ENCODE measurements at regions of chr5 and their contacts with region 1.

Region 1: DNA sequence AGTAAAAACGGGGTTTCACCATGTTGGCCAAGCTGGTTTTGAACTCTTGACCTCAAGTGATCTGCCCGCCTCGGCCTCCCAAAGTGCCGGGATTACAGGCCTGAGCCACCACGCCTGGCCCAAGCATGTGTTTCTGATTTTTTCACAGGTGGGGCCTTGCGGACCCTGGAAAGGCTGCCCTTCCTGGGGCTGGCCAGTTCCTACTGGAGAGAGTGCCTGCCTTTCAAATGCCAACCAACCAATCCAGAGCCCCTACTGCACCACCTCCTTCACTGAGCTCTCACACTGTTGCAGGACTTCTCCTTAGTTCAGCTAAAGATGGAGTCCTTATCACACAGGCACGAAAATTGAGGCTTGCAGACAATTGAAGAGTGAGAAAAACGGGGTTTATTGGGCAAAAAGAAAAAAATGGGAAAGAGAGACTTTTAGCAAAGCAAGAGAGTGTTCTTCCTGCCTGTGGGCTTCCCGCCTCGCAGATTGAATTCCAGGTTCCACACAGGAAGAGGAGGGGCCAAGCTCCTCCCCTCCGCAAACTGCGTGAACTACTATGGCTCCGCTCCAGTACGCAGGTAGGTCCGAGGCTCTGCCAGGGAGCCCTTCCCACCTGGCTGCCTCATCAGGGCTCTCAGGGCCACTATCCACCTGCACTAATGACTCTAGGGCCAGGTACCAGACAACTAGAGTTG is 8.3 kb upstream of the CMBL start:
- DNase-seq: no peak
- ATAC-seq: peak in 1 of 2 experiments; percentile 39; a peak in 1 of 6 replicates
- H3K4me3 ChIP-seq: no peak overlapping the region
- H3K27ac ChIP-seq: no peak overlapping the region
- H3K4me1 ChIP-seq: peaks cover 2% of the 10 kb centered on the region
- CTCF ChIP-seq: no peak
- EP300 ChIP-seq: no peak
- POLR2A ChIP-seq: no peak
- RAD21 ChIP-seq: no peak

Region 2: DNA sequence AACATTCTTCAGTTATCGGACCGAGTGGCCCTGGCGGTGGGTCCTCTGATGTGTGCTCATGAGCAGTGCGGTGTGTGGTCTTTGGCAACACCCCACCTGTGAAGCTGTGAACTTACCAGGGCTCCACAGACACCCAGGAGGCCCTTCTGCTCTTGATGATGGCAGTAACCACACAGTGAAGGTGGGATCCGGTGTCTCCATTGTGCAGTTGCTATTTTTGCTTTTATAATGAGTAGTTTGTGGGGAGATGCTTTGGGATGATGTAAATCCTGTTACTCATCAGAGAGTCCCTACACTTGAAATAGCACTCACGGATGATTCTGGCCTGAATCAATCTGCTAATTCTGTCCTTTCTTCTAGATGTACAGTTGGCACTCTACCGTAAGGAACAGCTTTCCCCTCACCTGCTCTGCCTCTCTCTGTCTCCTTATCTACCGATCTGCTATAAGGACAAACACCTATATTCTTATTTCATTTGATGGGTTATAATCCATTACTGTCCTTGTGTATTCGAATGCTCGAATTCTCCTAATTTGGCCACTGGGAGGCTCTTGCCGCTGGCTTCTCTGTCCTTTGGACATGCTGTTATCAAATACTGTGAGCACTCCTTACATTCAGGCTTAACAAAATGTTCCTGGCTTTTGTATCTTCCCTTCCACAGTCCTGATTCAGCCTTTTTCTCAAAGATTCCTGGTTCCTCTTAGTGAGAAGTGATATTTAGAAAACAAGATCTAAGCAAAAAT is 86.5 kb before region 1 on chr5:
- CTCF ChIA-PET with region 1: no interaction called
- POLR2A ChIA-PET with region 1: no interaction called
- DNase-seq: no peak
- ATAC-seq: peak in 1 of 2 experiments; percentile 49; a peak in 2 of 6 replicates
- H3K4me3 ChIP-seq: no peak overlapping the region
- H3K27ac ChIP-seq: no peak overlapping the region
- H3K4me1 ChIP-seq: peaks cover 18% of the 10 kb centered on the region
- CTCF ChIP-seq: no peak
- EP300 ChIP-seq: no peak
- POLR2A ChIP-seq: no peak
- RAD21 ChIP-seq: no peak

Region 3: DNA sequence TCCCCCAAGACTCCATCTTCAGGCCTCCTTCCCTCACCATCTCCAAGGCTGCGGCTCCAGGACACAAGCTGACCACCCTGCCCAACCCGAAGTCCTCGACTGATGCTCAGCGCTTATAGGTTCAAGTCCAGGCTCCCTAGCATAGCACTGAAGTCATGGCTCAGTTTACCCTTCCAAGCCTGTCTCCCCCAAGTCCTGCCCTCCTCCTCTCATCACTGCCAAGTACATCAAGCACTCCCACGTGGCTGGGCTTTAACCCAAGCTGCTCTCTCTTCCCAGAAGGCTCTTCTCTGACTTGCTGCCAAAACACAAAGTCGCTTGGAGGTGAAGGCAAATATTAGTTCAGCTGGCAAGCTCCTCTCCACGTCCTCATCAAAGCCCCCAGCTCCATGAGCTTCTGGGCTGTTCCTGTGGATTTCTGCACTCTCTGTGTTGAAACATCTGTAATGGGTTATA is 15.4 kb after region 1 on chr5:
- CTCF ChIA-PET with region 1: interaction called, 5 read pairs
- POLR2A ChIA-PET with region 1: interaction called, 10 read pairs
- DNase-seq: peak in 1 of 2 experiments; percentile 56
- ATAC-seq: peak in 1 of 2 experiments; percentile 17; a peak in 1 of 6 replicates
- H3K4me3 ChIP-seq: no peak overlapping the region
- H3K27ac ChIP-seq: no peak overlapping the region
- H3K4me1 ChIP-seq: peaks cover 22% of the 10 kb centered on the region; the same call in 2 of the 3 replicates
- CTCF ChIP-seq: no peak
- EP300 ChIP-seq: no peak
- POLR2A ChIP-seq: no peak
- RAD21 ChIP-seq: no peak

Region 4: GRCh38 chr5:10885026-10885425 is 569.1 kb after region 1 on chr5:
- CTCF ChIA-PET with region 1: no interaction called
- POLR2A ChIA-PET with region 1: no interaction called
- DNase-seq: no peak
- ATAC-seq: no peak
- H3K4me3 ChIP-seq: no peak overlapping the region
- H3K27ac ChIP-seq: no peak overlapping the region
- H3K4me1 ChIP-seq: no peaks in the 10 kb centered on the region
- CTCF ChIP-seq: no peak
- EP300 ChIP-seq: no peak
- POLR2A ChIP-seq: no peak
- RAD21 ChIP-seq: no peak

Measured in A549 (cell line).